GM10248 (cell line): ENCODE measurements at regions of chr7 and their contacts with region 1.

Region 1: DNA sequence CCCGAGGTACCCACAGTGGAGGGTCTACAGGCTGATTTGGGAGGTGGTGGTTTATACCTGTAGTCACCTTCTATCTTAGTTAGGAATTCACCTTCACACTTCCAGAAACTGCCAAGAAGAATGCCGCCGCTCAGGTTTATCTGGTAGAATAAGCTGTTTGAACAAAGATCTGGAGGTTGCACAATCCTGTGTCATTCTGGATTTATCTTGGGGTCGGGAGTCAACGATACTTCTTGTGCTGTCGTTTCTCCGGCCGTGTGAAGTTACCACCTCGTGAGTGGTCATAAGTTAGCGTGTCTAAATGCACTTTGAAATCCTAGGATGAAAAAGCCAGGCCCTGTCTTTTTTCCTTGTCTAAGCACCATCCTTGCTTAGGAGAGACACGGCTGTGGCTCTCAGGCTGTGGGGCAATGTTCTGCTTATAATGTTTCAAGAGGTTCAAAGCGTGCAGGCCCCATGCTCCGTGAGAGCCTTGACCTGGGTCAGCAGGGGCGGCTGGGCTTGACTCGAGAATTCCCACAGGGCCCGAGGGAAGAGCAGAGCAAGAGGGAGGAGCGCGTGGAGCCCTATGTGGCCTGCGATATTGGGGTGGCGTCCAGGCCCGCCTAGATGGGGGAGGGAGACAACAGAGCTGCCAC is 35.5 kb downstream of the GRIFIN start:
- DNase-seq: no peak
- CTCF ChIP-seq: no peak

Region 2: GRCh38 chr7:2451171-2452073 is 10.7 kb after region 1 on chr7:
- CTCF ChIA-PET with region 1: interaction called, 28 read pairs
- POLR2A ChIA-PET with region 1: no interaction called
- DNase-seq: peak; percentile 90
- CTCF ChIP-seq: peak; percentile 78